ENCODE measurements at regions of chr12 and their contacts with region 1.

Region 1: GRCh38 chr12:104201238-104202001 is 14.2 kb upstream of the TXNRD1 start:
- DNase-seq: peak in 1 of 2 donors; percentile 25
- ATAC-seq: peak in 1 of 2 donors; percentile 81
- H3K4me3 ChIP-seq: no peak overlapping the region
- H3K27ac ChIP-seq: no peak overlapping the region
- H3K4me1 ChIP-seq: no peaks in the 10 kb centered on the region
- H3K27me3 ChIP-seq: no peaks in the 10 kb centered on the region
- CTCF ChIP-seq: peak; percentile 39 to 83 (median 72)
- POLR2A ChIP-seq: no peak

Region 2: GRCh38 chr12:103956516-103957027 is 244.8 kb before region 1 on chr12:
- in situ Hi-C with region 1: no loop called
- intact Hi-C with region 1: no loop called
- DNase-seq: peak in 1 of 2 donors; percentile 34
- ATAC-seq: peak; percentile 36 to 38
- H3K4me3 ChIP-seq: peak overlapping the region; percentile 76 to 87 (median 82)
- H3K27ac ChIP-seq: peak overlapping the region; percentile 81 to 92 (median 92)
- H3K4me1 ChIP-seq: peaks cover 22 to 25% of the 10 kb centered on the region in 2 donors
- H3K27me3 ChIP-seq: no peaks in the 10 kb centered on the region
- CTCF ChIP-seq: no peak
- POLR2A ChIP-seq: no peak

Region 3: DNA sequence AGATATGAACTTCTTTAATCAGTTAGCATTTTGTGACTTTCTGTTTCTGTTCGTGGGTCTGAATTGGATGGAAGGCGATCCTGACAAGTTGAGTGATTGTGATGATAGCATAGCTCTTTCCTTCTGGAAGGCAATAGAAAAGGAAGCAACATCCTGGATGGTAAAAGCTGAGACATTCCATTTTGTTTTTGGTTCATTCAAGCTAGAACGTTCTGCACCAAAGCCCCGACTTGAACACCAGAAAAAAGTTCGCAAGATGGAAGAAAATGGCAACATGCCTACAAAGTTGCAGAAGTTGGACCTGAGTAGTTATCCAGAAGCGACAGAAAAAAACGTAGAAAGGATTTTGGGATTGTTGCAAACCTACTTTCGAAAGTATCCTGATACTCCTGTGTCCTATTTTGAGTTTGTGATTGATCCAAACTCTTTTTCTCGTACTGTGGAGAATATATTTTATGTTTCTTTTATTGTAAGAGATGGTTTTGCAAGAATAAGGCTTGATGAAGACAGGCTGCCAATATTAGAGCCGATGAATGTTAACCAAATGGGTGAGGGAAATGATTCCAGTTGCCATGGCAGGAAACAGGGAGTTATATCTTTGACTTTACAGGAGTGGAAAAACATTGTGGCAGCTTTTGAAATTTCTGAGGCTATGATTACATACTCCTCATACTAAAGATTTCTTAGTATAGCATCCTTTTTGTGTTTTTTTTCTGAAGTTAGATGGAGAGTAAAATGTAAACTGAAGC is 103.0 kb after region 1 on chr12:
- in situ Hi-C with region 1: no loop called
- intact Hi-C with region 1: no loop called
- DNase-seq: no peak
- ATAC-seq: no peak
- H3K4me3 ChIP-seq: peak overlapping the region; percentile 47 to 57 (median 54)
- H3K27ac ChIP-seq: peak overlapping the region; percentile 73 to 86 (median 80)
- H3K4me1 ChIP-seq: peaks cover 51 to 56% of the 10 kb centered on the region in 2 donors
- H3K27me3 ChIP-seq: no peaks in the 10 kb centered on the region
- CTCF ChIP-seq: no peak
- POLR2A ChIP-seq: no peak

Region 4: DNA sequence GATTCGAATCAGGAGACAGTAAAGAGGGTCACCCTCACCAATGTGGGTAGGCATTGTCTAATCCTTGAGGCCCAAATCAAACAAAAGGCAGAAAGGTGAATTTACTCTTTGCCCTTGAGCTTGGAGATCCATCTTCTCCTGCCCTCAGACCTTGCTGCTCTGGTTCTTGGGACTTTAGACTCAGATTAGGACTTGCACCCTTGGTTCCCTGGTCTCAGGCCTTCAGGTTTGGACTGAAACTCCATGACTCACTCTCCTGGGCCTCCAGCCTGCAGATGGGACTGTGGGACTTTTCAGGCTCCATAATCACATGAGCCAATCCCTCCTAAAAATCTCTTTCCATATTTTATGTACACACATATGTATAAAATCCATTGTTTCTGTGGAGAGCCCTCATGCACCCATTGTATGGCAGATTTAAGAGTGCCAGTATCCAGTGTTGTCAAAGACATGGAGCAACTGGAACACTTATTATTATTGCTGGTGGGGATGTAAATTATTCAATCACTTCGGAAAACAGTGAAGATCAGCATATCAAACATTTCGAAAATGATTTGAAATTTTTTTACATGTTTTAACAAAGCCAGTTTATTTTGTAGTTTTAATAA is 150.8 kb after region 1 on chr12:
- in situ Hi-C with region 1: loop called (anchors 5 to 10 kb)
- intact Hi-C with region 1: no loop called
- DNase-seq: no peak
- ATAC-seq: no peak
- H3K4me3 ChIP-seq: no peak overlapping the region
- H3K27ac ChIP-seq: no peak overlapping the region
- H3K4me1 ChIP-seq: peaks cover 5 to 18% of the 10 kb centered on the region in 2 donors
- H3K27me3 ChIP-seq: no peaks in the 10 kb centered on the region
- CTCF ChIP-seq: no peak
- POLR2A ChIP-seq: no peak

Region 5: GRCh38 chr12:104358347-104359003 is 157.1 kb after region 1 on chr12:
- in situ Hi-C with region 1: loop called (anchors 5 to 10 kb)
- intact Hi-C with region 1: loop called (anchors 1 kb)
- DNase-seq: peak in 1 of 2 donors; percentile 46
- ATAC-seq: peak; percentile 58 to 60
- H3K4me3 ChIP-seq: no peak overlapping the region
- H3K27ac ChIP-seq: no peak overlapping the region
- H3K4me1 ChIP-seq: no peaks in the 10 kb centered on the region
- H3K27me3 ChIP-seq: no peaks in the 10 kb centered on the region
- CTCF ChIP-seq: peak; percentile 64 to 80 (median 69)
- POLR2A ChIP-seq: no peak

Region 6: GRCh38 chr12:104877123-104877705 is 675.8 kb after region 1 on chr12:
- in situ Hi-C with region 1: loop called in 2 of 4 experiments (anchors 10 kb)
- intact Hi-C with region 1: loop called (anchors 2 kb)
- DNase-seq: no peak
- ATAC-seq: peak in 1 of 2 donors; percentile 44
- H3K4me3 ChIP-seq: no peak overlapping the region
- H3K27ac ChIP-seq: no peak overlapping the region
- H3K4me1 ChIP-seq: no peaks in the 10 kb centered on the region
- H3K27me3 ChIP-seq: no peaks in the 10 kb centered on the region
- CTCF ChIP-seq: peak in 4 of 5 experiments; percentile 46 to 60 (median 52)
- POLR2A ChIP-seq: no peak

Region 7: DNA sequence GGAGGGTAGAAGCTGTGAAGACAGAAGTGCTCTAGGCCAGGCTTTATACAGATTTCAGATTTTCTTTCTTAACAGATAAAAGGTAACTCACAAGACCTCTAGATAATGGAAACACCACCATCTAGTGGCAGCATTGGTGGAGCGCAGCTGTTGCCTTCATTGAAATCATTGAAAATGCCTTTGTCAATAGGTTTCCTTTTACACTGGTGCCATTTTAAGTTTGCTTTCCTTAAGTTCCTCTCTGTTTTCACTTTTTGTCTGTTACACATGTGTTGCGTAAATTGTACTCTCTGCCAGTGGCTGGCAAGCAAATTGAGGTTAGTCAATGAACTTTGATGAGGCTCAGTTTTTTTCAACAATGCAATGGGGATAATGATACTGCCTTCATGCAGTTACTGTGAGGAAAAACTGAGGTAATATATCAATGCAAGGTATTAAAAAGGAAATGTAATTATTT is 851.7 kb after region 1 on chr12:
- in situ Hi-C with region 1: loop called (anchors 10 to 25 kb)
- intact Hi-C with region 1: loop called (anchors 1 kb)
- DNase-seq: peak; percentile 14 to 65
- ATAC-seq: peak; percentile 50 to 65
- H3K4me3 ChIP-seq: no peak overlapping the region
- H3K27ac ChIP-seq: no peak overlapping the region
- H3K4me1 ChIP-seq: no peaks in the 10 kb centered on the region
- H3K27me3 ChIP-seq: no peaks in the 10 kb centered on the region
- CTCF ChIP-seq: peak; percentile 57 to 88 (median 71)
- POLR2A ChIP-seq: no peak

Region 8: DNA sequence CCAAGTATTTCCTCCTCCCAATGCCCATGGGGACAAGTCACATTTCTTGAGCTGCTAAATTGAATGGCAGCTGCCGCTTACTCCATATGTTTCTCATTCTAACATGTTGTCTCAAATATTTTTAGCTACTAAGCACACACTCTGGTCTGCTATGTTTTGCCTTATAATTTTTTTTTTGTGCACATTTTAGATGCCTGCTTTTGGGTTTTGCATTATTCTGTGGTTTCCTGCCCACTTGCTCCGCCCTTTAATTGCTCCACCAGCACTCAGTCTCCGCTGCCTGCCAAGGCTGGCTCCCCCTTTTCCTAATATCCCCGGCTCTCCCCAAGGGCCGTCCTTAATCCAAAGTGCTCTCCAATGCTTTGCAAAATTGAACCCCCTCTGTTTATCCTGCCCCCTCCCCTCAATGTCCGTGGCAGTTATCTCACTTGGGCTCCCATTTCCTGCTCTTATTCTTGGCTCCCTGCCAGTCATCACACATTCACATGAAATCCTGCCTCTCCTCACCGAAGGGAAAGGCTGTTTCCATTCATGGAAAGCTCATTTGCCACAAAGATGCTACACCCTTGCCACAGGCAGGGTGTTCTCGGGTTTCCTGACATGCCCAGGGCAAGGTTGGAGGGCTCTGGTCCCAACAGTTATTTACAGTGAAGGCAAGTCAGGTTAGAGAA is 1208.5 kb after region 1 on chr12:
- in situ Hi-C with region 1: no loop called
- intact Hi-C with region 1: no loop called
- DNase-seq: no peak
- ATAC-seq: peak; percentile 39 to 63
- H3K4me3 ChIP-seq: no peak overlapping the region
- H3K27ac ChIP-seq: peak overlapping the region in 1 of 4 donors; percentile 27
- H3K4me1 ChIP-seq: peaks cover 6% of the 10 kb centered on the region in 2 donors
- H3K27me3 ChIP-seq: no peaks in the 10 kb centered on the region
- CTCF ChIP-seq: no peak
- POLR2A ChIP-seq: no peak